Prostate gland (tissue), 2 donors: ENCODE measurements at regions of chr1 and their contacts with region 1.

Region 1: GRCh38 chr1:67766141-67766978 is 66.9 kb downstream of the GNG12 start:
- DNase-seq: no peak
- H3K4me3 ChIP-seq: no peak overlapping the region
- H3K27ac ChIP-seq: no peak overlapping the region
- H3K4me1 ChIP-seq: no peaks in the 10 kb centered on the region
- H3K27me3 ChIP-seq: no peaks in the 10 kb centered on the region
- CTCF ChIP-seq: peak; percentile 72 to 80 (median 76)
- POLR2A ChIP-seq: no peak

Region 2: DNA sequence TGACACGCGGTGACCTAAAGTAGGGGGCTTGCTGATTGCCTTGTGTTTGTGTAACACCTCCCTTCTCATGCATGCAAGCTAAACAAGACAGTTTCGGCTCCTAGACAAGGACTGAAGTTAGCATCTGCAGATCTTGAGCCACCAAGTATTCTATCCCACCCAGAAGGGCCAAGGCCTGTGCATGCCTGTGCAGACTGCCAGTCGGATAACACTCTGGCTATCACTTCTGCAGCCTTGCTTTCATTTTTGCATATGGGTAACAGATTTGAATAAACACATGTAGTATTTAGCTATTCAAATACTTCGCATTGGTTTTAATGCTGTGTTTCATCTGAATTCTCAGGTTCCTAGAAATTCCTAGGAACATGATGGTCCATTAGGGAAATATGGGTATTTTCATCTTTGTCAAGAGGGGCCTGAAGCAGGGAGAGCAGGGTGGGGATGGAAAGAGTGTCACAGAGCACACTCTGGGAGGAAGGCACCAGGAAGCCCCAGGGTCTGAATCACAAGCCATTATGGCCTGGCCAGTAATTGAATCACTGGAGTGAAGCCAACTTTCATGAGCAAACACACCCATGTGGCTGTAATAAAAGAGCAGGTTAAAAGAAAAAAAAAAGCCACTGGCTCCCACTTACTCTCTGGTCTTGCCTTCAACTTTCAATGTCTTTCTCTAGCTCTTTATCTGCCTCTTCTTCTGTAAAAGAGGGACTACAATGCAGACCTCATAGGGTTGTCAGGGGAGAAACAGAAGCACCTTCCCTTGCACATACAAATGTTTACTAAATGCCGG is 53.1 kb before region 1 on chr1:
- intact Hi-C with region 1: no loop called
- DNase-seq: no peak
- H3K4me3 ChIP-seq: no peak overlapping the region
- H3K27ac ChIP-seq: peak overlapping the region in 1 of 2 donors; percentile 10
- H3K4me1 ChIP-seq: peaks cover 14% of the 10 kb centered on the region
- H3K27me3 ChIP-seq: no peaks in the 10 kb centered on the region
- CTCF ChIP-seq: no peak
- POLR2A ChIP-seq: no peak

Region 3: DNA sequence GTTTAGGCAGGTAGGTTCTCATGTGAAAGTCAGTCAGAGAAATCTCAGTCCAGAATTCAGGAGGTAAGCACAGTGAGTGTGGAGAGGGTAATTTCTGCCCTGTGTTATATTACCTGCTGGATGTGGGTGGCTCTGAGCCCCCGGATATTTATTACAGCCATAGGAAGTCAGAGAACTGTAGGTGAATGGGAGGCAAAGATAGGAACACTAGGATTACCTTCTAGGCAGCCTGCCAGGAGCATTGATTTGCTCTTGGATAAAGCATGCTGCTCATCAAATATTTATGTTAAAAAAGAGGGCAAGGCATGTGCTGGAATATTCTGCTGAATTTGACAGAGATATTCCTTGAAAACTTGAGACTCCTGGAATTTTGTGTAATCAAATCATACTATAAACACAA is 58.4 kb after region 1 on chr1:
- intact Hi-C with region 1: loop called (anchors 5 kb)
- DNase-seq: no peak
- H3K4me3 ChIP-seq: no peak overlapping the region
- H3K27ac ChIP-seq: no peak overlapping the region
- H3K4me1 ChIP-seq: no peaks in the 10 kb centered on the region
- H3K27me3 ChIP-seq: no peaks in the 10 kb centered on the region
- CTCF ChIP-seq: no peak
- POLR2A ChIP-seq: no peak

Region 4: GRCh38 chr1:68111519-68112436 is 345.4 kb after region 1 on chr1:
- intact Hi-C with region 1: loop called (anchors 2 kb)
- DNase-seq: peak; percentile 32
- H3K4me3 ChIP-seq: no peak overlapping the region
- H3K27ac ChIP-seq: no peak overlapping the region
- H3K4me1 ChIP-seq: no peaks in the 10 kb centered on the region
- H3K27me3 ChIP-seq: no peaks in the 10 kb centered on the region
- CTCF ChIP-seq: peak in 3 of 4 experiments; percentile 32 to 66 (median 50)
- POLR2A ChIP-seq: no peak

Region 5: DNA sequence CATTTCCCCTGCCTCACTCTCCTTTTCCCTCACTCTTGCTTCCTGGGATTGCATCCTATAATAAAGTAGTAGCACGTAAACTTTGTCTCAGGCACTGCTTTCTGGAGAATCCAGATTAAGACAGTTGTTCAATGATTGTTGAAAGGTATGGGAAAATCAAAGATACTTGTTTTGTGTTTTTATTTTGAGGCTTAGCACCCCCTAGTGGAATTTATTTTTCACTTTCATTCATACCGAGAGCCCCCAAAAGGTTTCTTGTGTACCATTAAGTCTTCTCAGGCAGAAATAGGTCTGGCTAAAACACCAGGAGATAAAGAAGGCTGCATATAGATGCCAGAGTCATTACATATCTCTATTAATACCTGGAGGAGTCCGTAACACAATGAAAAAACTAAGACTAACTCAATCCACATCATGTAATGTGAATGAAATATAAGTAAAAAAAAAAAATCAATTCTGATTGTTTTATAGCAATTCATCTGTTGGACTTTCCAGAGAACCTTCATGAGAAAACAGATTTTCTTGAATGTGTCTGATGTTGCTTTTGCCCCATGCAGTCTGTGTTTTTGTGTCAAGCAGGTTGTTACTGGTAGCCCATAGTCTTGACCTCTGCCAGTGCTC is 579.9 kb after region 1 on chr1:
- intact Hi-C with region 1: loop called (anchors 5 kb)
- DNase-seq: no peak
- H3K4me3 ChIP-seq: no peak overlapping the region
- H3K27ac ChIP-seq: no peak overlapping the region
- H3K4me1 ChIP-seq: no peaks in the 10 kb centered on the region
- H3K27me3 ChIP-seq: no peaks in the 10 kb centered on the region
- CTCF ChIP-seq: peak in 3 of 4 experiments; percentile 38 to 49 (median 44)
- POLR2A ChIP-seq: no peak